Gastrocnemius medialis (tissue), 4 donors: ENCODE measurements at regions of chr2 and their contacts with region 1.

Region 1: GRCh38 chr2:70994756-70995729 is at the start of gene TEX261:
- DNase-seq: peak; percentile 71 to 83
- ATAC-seq: peak; percentile 91 to 97
- H3K4me3 ChIP-seq: peak within 1 kb of the TSS; percentile 91 to 94 (median 94)
- H3K27ac ChIP-seq: peak within 1 kb of the TSS; percentile 85 to 92 (median 88)
- H3K4me1 ChIP-seq: peaks cover 14 to 16% of the 10 kb centered on the region in 2 donors
- H3K27me3 ChIP-seq: no peaks in the 10 kb centered on the region
- CTCF ChIP-seq: peak; percentile 43 to 82 (median 56)
- POLR2A ChIP-seq: peak; percentile 67 to 74
- total RNA-seq, gene TEX261: 34.0 to 54.2 (median 38.7) TPM

Region 2: DNA sequence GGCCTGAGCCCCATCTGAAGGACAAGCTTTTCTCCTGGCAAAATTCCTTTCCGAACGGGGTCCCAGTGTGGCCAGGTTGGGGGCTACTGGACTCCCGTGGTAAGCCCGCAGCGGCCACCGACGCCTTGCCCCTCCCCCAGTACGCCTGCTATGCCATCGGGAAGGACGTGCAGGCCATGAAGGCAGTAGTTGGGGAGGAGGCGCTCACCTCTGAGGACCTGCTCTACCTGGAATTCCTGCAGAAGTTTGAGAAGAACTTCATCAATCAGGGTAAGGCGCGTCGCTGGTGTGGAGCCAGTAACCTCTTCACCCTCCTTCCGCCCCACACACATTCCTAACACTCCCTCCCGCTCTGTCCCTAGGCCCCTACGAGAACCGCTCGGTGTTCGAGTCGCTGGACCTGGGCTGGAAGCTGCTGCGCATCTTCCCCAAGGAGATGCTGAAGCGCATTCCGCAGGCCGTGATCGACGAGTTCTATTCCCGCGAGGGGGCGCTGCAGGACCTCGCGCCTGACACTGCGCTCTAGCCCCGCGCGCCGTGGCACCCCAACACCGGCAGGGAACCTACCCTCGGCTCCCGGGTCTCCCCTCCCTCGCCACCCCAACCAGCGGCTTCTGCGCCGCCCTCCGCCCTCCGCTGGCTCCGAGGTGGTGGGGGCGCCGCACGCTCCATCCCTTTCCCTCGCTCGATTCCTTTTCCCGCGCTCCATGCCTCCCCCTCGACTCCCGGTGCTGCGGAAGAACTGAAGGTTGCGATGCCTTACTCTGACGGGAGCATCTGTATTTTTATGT is 30.3 kb before region 1 on chr2:
- in situ Hi-C with region 1: no loop called
- intact Hi-C with region 1: loop called (anchors 2 kb)
- DNase-seq: peak in 1 of 2 donors; percentile 23
- ATAC-seq: peak; percentile 45 to 53
- H3K4me3 ChIP-seq: peak overlapping the region; percentile 44 to 54 (median 50)
- H3K27ac ChIP-seq: no peak overlapping the region
- H3K4me1 ChIP-seq: peaks cover 0 to 3% of the 10 kb centered on the region in 2 donors
- H3K27me3 ChIP-seq: peaks cover 19 to 22% (median 20%) of the 10 kb centered on the region in 3 donors
- CTCF ChIP-seq: peak; percentile 27 to 76 (median 62)
- POLR2A ChIP-seq: no peak

Region 3: DNA sequence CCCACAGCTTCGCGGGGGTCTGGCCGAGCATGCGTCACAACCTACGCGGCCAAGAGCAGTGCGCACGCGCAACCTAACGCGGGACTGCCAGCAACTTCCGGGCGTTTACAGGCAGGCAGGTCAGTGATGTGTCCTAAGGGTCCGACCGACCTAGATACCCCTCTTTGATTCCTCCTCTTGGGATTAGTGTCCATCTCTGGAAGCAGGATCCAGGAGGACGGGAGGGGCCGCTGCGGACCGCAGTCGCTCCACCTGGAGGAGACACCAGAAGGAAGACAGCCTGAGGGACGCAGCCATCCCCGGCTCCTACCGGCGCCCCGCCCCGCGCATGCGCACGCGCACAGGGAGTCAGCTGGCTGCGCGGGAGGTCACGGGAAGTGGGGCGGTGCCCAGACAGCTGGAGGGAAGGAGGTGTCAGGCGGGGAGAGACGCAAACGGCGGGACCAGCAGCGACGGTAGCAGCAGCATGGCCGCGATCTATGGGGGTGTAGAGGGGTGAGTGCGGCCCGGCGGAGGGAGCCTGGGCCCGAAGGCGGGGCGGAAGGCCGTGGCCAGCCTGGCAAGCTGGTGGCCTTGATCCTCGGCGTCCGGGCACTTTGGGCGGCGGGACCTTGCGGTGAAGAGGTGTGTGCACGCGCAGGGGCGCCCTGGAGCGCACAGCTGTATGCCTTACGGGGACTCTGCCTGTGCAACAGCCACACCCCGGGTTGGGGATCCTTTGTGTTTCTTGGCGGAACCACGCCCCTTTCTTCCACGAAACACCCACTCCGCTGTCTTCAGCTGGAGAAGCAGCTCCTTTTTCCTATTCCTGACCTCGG is 73.4 kb after region 1 on chr2 and contains the start of gene NAGK:
- in situ Hi-C with region 1: no loop called
- intact Hi-C with region 1: loop called (anchors 2 kb)
- DNase-seq: peak; percentile 92 to 95
- ATAC-seq: peak; percentile 94 to 95
- H3K4me3 ChIP-seq: peak within 1 kb of the TSS; percentile 76 to 93 (median 82)
- H3K27ac ChIP-seq: peak within 1 kb of the TSS; percentile 89 to 99 (median 94)
- H3K4me1 ChIP-seq: peaks cover 25 to 26% of the 10 kb centered on the region in 2 donors
- H3K27me3 ChIP-seq: no peaks in the 10 kb centered on the region
- CTCF ChIP-seq: peak in 1 of 5 experiments; percentile 38
- POLR2A ChIP-seq: peak; percentile 100
- total RNA-seq, gene NAGK: 24.2 to 43.5 (median 41.2) TPM